Right ventricle myocardium inferior (tissue), 1 donor: ENCODE measurements at regions of chr3 and their contacts with region 1.

Region 1: DNA sequence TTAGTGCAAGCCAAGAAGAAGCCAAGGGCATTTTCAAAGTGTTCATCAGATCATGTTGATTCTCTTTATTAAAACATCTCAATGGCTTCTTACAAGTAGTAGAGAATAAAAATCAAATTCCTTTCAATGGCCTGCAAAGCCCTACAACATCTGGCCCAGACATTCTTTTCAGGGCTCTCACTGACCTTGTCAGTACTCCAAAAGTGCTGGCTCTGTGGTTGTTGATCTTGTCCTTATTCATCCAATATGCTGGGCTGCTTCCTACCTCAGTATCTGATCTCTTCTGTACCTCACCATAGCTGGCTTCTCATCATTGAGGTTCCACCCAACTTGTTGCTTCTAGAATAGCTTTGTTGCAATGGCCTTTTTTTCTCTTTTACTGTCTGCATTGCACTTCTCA is 74.0 kb upstream of the SAMMSON start:
- DNase-seq: no peak
- ATAC-seq: no peak

Region 2: DNA sequence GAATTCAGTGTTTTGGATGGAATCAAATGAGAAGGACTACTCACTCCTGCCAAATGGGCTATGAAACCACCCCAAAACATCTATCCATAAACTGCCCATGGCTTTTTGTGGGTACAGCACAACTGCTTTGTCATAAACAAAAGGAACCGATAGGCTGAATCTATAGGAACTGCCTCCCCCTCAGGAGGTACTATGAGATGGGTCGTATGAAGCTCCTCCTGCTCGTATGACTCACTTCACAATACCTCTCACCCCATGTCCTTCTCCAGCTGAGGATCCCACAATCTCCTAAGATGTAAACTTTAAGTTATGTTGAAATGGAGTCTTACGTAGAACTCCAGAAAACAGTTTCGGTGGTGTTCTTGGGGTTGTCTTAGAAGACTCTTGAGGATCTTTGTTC is 55.9 kb before region 1 on chr3:
- intact Hi-C with region 1: loop called (anchors 5 kb)
- DNase-seq: no peak
- ATAC-seq: no peak

Region 3: DNA sequence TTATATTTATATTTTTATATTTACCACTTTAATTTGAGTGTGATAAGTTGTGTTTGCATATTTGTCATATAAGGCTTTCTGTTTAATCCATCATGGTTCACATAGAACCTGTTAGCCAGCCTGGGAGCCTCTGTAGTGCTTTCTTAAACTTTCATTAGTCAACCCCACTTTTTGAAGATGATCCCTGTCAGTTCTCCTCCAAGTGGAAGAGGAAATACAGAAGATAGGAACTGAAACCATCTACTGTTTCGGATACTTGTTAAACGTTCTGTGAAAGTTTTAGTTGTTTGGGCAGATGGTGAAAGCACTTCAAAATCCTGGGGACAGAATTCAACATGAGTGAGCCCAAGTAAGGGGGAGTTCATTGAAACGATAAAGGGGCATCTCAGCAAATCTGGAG is 69.4 kb after region 1 on chr3:
- intact Hi-C with region 1: no loop called
- DNase-seq: no peak
- ATAC-seq: peak; percentile 37